ENCODE measurements at regions of chr10 and their contacts with region 1.

Region 1: DNA sequence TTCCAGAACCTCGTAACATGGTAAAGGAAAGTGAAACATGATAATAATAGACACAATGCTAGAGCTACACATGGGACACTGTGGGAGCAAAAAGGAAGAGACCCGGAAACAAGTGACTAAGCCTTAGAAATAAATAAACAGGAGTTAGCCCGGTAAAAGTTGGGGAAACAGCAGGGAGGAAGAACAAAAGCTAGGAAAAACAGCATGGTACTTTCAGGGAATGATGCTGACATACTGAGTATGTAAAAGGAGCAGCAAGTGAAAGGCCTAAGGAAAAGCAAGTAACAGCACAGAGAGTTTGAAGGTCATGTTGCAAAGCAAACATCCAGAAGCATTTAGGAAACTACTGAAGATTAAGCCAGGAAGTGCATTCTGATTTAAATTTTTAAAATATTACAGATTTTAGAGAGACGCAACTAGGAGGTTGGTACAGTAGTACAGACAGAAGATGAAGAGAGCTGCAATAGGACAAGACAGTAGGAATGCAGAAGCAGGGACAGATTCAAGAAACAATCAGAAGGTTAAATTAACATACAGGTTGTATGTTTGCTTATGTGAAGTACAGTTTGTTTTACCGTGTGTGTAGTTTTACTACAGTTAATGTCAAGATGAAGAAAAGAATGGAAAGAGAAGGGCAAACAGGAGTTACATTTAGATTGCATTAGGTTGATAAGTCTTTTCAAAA is 63.7 kb downstream of the ARHGAP12 start:
- DNase-seq: no peak
- H3K4me3 ChIP-seq: no peak overlapping the region
- H3K4me3 Mint-ChIP-seq: peak overlapping the region in 1 of 8 donors; percentile 11
- H3K27ac ChIP-seq: no peak overlapping the region
- H3K27ac Mint-ChIP-seq: peak overlapping the region in 2 of 7 donors; percentile 19 to 25
- H3K4me1 ChIP-seq: no peaks in the 10 kb centered on the region
- H3K4me1 Mint-ChIP-seq: peaks cover 18 to 31% (median 25%) of the 10 kb centered on the region in 4 donors
- H3K27me3 ChIP-seq: no peaks in the 10 kb centered on the region
- H3K27me3 Mint-ChIP-seq: no peaks in the 10 kb centered on the region

Region 2: GRCh38 chr10:31603235-31604087 is 261.5 kb before region 1 on chr10:
- CTCF ChIA-PET with region 1: no interaction called
- POLR2A ChIA-PET with region 1: no interaction called
- intact Hi-C with region 1: no loop called
- DNase-seq: peak; percentile 35 to 60 (median 40)
- H3K4me3 ChIP-seq: peak overlapping the region; percentile 63 to 65
- H3K4me3 Mint-ChIP-seq: peak overlapping the region; percentile 88 to 93 (median 90)
- H3K27ac ChIP-seq: no peak overlapping the region
- H3K27ac Mint-ChIP-seq: peak overlapping the region in 2 of 7 donors; percentile 44 to 94
- H3K4me1 ChIP-seq: peaks cover 11% of the 10 kb centered on the region
- H3K4me1 Mint-ChIP-seq: peaks cover 8 to 11% (median 10%) of the 10 kb centered on the region in 4 donors
- H3K27me3 ChIP-seq: no peaks in the 10 kb centered on the region
- H3K27me3 Mint-ChIP-seq: peaks cover 0 to under 1% of the 10 kb centered on the region in 2 donors

Region 3: DNA sequence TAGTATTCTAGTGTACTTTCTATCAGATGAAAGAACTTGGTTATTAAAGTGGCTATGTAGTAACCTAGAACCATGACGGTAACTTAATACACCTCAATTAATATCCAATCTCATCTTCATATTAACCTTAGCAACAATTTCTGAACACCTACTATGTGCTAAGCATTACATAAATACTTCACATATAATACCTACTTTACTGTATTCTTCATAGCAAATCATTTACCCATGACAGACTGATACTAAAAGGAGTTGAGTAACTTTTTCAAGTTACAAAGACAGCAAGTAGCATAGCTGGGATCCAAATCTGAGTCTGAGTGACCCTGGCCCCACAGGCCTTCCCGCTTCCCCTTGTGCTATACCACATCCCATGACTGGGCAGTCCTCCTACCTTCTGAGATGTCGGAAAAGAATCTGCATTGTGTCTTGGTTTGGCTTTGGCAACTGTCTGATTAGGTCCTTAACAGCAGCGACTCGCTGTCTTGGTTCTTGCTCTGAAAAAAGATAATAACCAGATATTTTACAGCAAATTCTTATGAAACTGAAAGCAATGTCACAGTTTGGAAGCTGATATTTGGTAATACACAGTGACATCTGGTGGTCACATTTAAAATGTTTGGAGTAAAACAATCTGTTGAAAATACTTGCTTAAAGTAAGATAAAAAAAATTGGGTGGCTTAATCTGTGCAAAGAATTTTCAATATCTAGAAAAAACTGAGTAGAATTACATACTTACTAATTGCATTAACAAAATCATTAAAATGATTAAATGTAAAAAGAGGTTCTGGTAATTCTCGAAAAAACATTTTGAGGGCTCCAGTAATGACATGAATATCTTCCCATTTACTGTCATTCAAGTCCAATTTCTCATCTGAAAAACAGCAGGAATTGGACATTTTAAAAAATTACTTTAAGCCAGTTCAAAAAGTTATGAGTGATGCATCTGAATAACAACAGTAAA is 56.4 kb before region 1 on chr10:
- CTCF ChIA-PET with region 1: no interaction called
- POLR2A ChIA-PET with region 1: no interaction called
- intact Hi-C with region 1: no loop called
- DNase-seq: peak in 4 of 5 donors; percentile 44 to 50 (median 48)
- H3K4me3 ChIP-seq: no peak overlapping the region
- H3K4me3 Mint-ChIP-seq: peak overlapping the region in 4 of 8 donors; percentile 26 to 71 (median 56)
- H3K27ac ChIP-seq: no peak overlapping the region
- H3K27ac Mint-ChIP-seq: peak overlapping the region in 5 of 7 donors; percentile 71 to 94 (median 88)
- H3K4me1 ChIP-seq: peaks cover 4% of the 10 kb centered on the region
- H3K4me1 Mint-ChIP-seq: peaks cover 3 to 7% (median 4%) of the 10 kb centered on the region in 4 donors
- H3K27me3 ChIP-seq: no peaks in the 10 kb centered on the region
- H3K27me3 Mint-ChIP-seq: no peaks in the 10 kb centered on the region

Region 4: GRCh38 chr10:31994926-31995325 is 129.9 kb after region 1 on chr10:
- CTCF ChIA-PET with region 1: interaction called, 10 read pairs
- POLR2A ChIA-PET with region 1: no interaction called
- intact Hi-C with region 1: no loop called
- DNase-seq: no peak
- H3K4me3 ChIP-seq: no peak overlapping the region
- H3K4me3 Mint-ChIP-seq: no peak overlapping the region
- H3K27ac ChIP-seq: no peak overlapping the region
- H3K27ac Mint-ChIP-seq: no peak overlapping the region
- H3K4me1 ChIP-seq: no peaks in the 10 kb centered on the region
- H3K4me1 Mint-ChIP-seq: no peaks in the 10 kb centered on the region
- H3K27me3 ChIP-seq: no peaks in the 10 kb centered on the region
- H3K27me3 Mint-ChIP-seq: no peaks in the 10 kb centered on the region

Region 5: DNA sequence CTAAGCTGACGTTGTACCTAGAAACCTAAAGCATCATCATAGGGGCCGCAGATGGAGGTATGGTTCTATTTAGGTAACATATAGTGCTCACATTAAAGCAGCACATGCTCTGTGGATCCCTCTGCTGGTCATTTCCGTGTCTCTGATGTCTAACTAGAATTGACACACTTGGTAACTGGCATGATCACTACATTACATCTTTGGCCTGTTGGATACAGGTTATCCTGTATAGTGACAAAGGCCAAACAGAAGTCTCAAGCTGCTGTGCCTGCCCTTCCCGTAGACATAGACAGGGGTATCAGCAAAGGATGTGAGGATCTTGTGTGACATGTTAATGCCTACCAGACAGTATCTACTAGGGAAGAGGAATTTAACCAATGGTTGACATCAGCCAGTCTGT is 140.1 kb after region 1 on chr10:
- CTCF ChIA-PET with region 1: interaction called, 81 read pairs
- POLR2A ChIA-PET with region 1: interaction called, 4 read pairs
- intact Hi-C with region 1: loop called (anchors 1 kb)
- DNase-seq: peak in 4 of 5 donors; percentile 28 to 39 (median 36)
- H3K4me3 ChIP-seq: no peak overlapping the region
- H3K4me3 Mint-ChIP-seq: no peak overlapping the region
- H3K27ac ChIP-seq: no peak overlapping the region
- H3K27ac Mint-ChIP-seq: peak overlapping the region in 3 of 7 donors; percentile 13 to 25 (median 14)
- H3K4me1 ChIP-seq: no peaks in the 10 kb centered on the region
- H3K4me1 Mint-ChIP-seq: peaks cover 2 to 12% (median 9%) of the 10 kb centered on the region in 4 donors
- H3K27me3 ChIP-seq: no peaks in the 10 kb centered on the region
- H3K27me3 Mint-ChIP-seq: no peaks in the 10 kb centered on the region

Region 6: GRCh38 chr10:32169556-32169955 is 304.6 kb after region 1 on chr10:
- CTCF ChIA-PET with region 1: interaction called, 11 read pairs
- POLR2A ChIA-PET with region 1: no interaction called
- intact Hi-C with region 1: no loop called
- DNase-seq: no peak
- H3K4me3 ChIP-seq: no peak overlapping the region
- H3K4me3 Mint-ChIP-seq: no peak overlapping the region
- H3K27ac ChIP-seq: no peak overlapping the region
- H3K27ac Mint-ChIP-seq: no peak overlapping the region
- H3K4me1 ChIP-seq: no peaks in the 10 kb centered on the region
- H3K4me1 Mint-ChIP-seq: no peaks in the 10 kb centered on the region
- H3K27me3 ChIP-seq: no peaks in the 10 kb centered on the region
- H3K27me3 Mint-ChIP-seq: peaks cover 0 to 7% of the 10 kb centered on the region in 2 donors

Region 7: DNA sequence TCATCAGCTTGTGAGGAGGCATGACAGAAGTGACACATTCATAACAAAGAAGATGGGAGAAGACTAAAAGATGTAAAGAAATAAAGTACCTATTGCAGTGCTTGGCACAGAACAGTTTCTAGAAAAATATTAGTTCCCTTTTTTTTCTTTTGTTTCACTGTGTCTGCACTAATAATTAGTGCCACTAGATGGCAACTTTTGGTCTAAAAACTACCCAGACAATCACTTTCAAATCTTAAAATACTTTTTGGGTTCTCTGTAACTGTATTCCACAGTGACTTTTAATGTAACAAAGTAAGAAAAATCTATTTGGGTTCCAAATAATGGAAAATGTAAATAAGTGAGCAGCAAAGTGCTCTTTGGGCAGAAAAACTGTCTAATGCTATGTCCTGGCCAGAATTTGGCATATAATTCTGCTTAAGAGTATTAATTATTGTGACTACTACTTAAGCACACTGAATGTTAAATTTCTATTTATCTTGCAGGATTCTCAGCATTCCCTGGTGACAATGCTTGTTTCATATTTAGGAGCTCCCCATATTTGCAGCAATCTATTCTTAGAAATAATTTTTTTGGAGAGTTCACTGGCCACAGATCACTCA is 326.0 kb after region 1 on chr10:
- CTCF ChIA-PET with region 1: no interaction called
- POLR2A ChIA-PET with region 1: no interaction called
- intact Hi-C with region 1: loop called (anchors 5 kb)
- DNase-seq: peak in 4 of 5 donors; percentile 31 to 44 (median 40)
- H3K4me3 ChIP-seq: no peak overlapping the region
- H3K4me3 Mint-ChIP-seq: no peak overlapping the region
- H3K27ac ChIP-seq: no peak overlapping the region
- H3K27ac Mint-ChIP-seq: peak overlapping the region in 4 of 7 donors; percentile 5 to 59 (median 50)
- H3K4me1 ChIP-seq: no peaks in the 10 kb centered on the region
- H3K4me1 Mint-ChIP-seq: peaks cover 0 to 6% (median 3%) of the 10 kb centered on the region in 4 donors
- H3K27me3 ChIP-seq: no peaks in the 10 kb centered on the region
- H3K27me3 Mint-ChIP-seq: no peaks in the 10 kb centered on the region

Region 8: GRCh38 chr10:32207544-32207943 is 342.6 kb after region 1 on chr10:
- CTCF ChIA-PET with region 1: interaction called, 5 read pairs
- POLR2A ChIA-PET with region 1: no interaction called
- intact Hi-C with region 1: loop called (anchors 1 kb)
- DNase-seq: peak; percentile 39 to 52 (median 45)
- H3K4me3 ChIP-seq: no peak overlapping the region
- H3K4me3 Mint-ChIP-seq: no peak overlapping the region
- H3K27ac ChIP-seq: no peak overlapping the region
- H3K27ac Mint-ChIP-seq: no peak overlapping the region
- H3K4me1 ChIP-seq: no peaks in the 10 kb centered on the region
- H3K4me1 Mint-ChIP-seq: peaks cover 0 to 2% (median 0%) of the 10 kb centered on the region in 4 donors
- H3K27me3 ChIP-seq: no peaks in the 10 kb centered on the region
- H3K27me3 Mint-ChIP-seq: peaks cover 1% of the 10 kb centered on the region in 2 donors

Measured in CD4-positive, alpha-beta memory T cell (primary cell).